ENCODE measurements at regions of chr1 and their contacts with region 1.

Region 1: GRCh38 chr1:100037927-100038659 is 68.3 kb downstream of the SLC35A3 start:
- DNase-seq: peak; percentile 90 to 95
- ATAC-seq: peak; percentile 87 to 97 (median 92)
- H3K4me3 ChIP-seq: peak overlapping the region; percentile 98
- H3K4me3 Mint-ChIP-seq: peak overlapping the region; percentile 99
- H3K27ac ChIP-seq: peak overlapping the region; percentile 99
- H3K27ac Mint-ChIP-seq: peak overlapping the region; percentile 99
- H3K4me1 ChIP-seq: peaks cover 8% of the 10 kb centered on the region
- H3K4me1 Mint-ChIP-seq: peaks cover 46 to 51% of the 10 kb centered on the region in 2 donors
- H3K27me3 ChIP-seq: no peaks in the 10 kb centered on the region
- H3K27me3 Mint-ChIP-seq: no peaks in the 10 kb centered on the region
- CTCF ChIP-seq: no peak

Region 2: DNA sequence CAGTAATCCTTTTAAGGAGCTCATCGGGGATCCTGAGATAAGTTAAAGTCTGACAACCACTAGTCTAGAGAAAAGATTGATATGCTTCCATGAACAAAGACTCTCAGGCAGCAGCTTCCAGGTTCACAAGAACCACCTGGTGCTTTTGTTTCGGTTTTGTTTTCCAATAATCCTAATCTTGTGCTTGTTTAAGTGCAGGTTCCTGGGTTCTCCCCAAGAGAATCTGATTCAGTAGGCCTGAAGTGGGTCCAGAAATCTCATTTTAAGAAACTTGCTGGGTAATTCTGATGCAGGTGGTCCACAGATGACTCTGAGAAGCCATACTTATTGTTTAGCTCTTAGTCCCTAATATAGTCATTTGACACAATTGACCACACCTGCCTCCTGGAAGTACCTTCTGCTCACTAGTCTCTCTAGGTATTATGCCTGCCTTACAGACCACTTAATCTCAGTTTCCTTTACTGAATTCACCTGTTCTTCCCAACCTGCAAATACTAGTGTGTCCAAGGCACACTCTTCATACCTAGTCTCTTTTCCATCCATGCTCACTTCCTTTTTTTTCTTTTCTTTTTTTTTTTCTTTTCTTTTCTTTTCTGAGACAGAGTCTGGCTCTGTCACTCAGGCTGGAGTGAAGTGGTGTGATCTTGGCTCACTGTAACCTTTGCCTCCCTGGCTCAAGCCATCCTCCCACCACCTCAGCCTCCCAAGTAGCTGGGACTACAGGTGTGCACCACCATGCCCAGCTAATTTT is 251.2 kb before region 1 on chr1:
- intact Hi-C with region 1: no loop called
- DNase-seq: no peak
- ATAC-seq: no peak
- H3K4me3 ChIP-seq: no peak overlapping the region
- H3K4me3 Mint-ChIP-seq: no peak overlapping the region
- H3K27ac ChIP-seq: no peak overlapping the region
- H3K27ac Mint-ChIP-seq: no peak overlapping the region
- H3K4me1 ChIP-seq: peaks cover 5% of the 10 kb centered on the region
- H3K4me1 Mint-ChIP-seq: peaks cover 4 to 6% of the 10 kb centered on the region in 2 donors
- H3K27me3 ChIP-seq: no peaks in the 10 kb centered on the region
- H3K27me3 Mint-ChIP-seq: peaks cover 16 to 38% of the 10 kb centered on the region in 2 donors
- CTCF ChIP-seq: no peak

Region 3: DNA sequence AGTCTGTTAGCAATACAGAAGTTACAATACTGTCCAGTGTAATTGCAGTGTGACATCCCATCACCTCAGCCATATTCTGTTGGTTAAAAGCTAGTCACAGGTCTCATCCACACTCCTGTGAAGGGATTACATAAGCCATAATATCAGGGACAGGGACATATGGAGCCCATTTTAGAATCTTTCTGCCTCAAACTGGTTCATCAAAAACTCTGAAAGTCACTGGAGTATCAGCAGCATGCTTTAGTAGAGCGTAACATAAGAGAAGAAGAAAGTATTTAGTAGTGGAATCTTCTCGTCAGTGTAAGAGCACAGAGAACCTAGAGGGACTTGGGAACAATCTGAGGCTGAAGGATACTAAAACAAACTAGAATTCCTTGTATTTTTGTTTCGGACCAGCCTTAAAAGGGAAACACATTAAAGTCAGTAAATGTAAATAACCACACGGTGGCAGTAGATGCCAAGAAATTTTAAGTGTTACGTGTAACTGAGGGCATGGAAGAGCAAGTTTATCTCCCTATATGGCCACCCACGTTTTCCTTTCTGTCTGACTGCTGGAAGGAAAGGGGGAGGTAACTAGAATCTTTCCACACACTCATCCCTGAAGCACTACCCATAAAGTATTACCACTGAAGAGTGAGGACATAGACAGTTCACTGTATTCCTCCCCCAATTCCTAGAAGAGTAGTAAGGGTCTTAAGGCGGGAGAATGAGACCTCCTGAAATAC is 229.5 kb before region 1 on chr1:
- intact Hi-C with region 1: loop called (anchors 1 kb)
- DNase-seq: peak in 1 of 2 donors; percentile 82
- ATAC-seq: peak; percentile 78 to 90 (median 88)
- H3K4me3 ChIP-seq: no peak overlapping the region
- H3K4me3 Mint-ChIP-seq: no peak overlapping the region
- H3K27ac ChIP-seq: no peak overlapping the region
- H3K27ac Mint-ChIP-seq: no peak overlapping the region
- H3K4me1 ChIP-seq: no peaks in the 10 kb centered on the region
- H3K4me1 Mint-ChIP-seq: no peaks in the 10 kb centered on the region
- H3K27me3 ChIP-seq: no peaks in the 10 kb centered on the region
- H3K27me3 Mint-ChIP-seq: peaks cover 7 to 8% of the 10 kb centered on the region in 2 donors
- CTCF ChIP-seq: peak; percentile 84

Region 4: DNA sequence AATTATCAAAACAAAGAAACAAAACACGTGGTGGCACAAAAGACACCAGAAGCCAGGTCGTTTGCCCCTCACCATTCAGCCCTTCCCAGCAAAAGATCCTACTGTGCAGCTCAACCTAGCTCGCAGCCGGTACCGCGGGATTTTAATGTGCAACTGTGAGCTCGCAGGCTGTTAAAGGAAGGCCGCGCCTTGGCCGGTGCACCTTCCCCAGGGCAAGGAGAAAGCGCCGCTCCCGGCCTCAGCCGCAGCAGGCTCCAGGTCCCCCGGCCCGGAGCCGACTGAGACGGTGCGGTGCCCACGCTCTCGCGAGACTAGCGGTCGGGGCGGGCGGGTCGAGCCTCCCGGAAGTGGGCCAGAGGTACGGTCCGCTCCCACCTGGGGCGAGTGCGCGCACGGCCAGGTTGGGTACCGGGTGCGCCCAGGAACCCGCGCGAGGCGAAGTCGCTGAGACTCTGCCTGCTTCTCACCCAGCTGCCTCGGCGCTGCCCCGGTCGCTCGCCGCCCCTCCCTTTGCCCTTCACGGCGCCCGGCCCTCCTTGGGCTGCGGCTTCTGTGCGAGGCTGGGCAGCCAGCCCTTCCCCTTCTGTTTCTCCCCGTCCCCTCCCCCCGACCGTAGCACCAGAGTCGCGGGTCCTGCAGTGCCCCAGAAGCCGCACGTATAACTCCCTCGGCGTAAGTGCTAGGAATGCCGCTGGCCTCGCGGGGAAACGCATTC is 188.2 kb before region 1 on chr1 and contains the start of gene AGL:
- intact Hi-C with region 1: loop called (anchors 2 kb)
- DNase-seq: peak; percentile 83 to 92
- ATAC-seq: peak; percentile 94 to 96 (median 95)
- H3K4me3 ChIP-seq: peak within 1 kb of the TSS; percentile 59
- H3K4me3 Mint-ChIP-seq: peak within 1 kb of the TSS; percentile 97
- H3K27ac ChIP-seq: peak within 1 kb of the TSS; percentile 63
- H3K27ac Mint-ChIP-seq: peak within 1 kb of the TSS; percentile 86 to 91
- H3K4me1 ChIP-seq: peaks cover 11% of the 10 kb centered on the region
- H3K4me1 Mint-ChIP-seq: peaks cover 27 to 28% of the 10 kb centered on the region in 2 donors
- H3K27me3 ChIP-seq: no peaks in the 10 kb centered on the region
- H3K27me3 Mint-ChIP-seq: peaks cover 2 to 6% of the 10 kb centered on the region in 2 donors
- CTCF ChIP-seq: no peak
- total RNA-seq, gene AGL: 13.5 to 19.4 (median 15.3) TPM

Region 5: DNA sequence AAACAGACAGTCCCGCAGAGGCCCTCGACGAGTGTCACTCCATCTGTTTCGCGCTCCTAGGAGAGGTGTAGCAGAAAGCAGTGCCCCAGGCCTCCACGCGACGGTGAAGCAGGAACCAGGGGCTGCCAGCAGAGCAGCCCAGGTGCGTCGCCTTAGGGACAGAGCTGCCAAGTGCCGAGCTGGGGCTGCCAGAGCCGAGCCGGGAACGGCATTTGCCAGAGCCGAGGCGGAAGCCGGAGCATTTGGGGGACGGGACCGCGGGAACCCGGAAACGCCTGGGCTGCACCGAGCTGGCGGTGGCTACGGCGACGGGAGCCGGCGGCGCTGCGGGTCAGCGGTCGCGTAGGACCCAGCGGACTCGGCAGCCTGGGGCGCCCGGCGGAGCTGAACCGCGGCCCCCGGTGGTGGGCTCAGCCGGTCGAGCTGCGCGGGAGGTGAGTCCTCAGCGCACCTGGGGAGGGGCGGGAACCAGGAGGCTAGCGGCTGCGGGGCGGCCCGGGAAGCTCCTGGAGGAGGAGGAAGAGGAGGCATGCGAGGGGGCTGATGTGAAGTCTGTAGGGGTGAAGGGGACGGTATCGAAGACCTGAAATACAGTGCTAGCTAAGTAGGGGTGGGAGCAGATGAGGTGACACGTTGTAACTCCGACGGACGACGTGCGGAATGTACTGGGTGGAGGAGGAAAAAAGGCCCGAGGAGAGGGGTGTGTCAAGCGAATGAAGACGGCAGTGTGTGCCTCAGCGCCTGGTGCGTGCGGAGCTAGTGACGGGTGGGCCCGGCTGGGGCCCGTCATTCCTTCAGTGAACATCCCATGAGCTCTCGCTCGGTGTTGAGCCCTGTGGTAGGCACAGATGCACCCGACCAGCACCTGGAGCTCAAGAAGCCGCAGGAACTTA is 68.1 kb before region 1 on chr1 and contains the start of gene SLC35A3:
- intact Hi-C with region 1: loop called (anchors 2 kb)
- DNase-seq: peak; percentile 75 to 87
- ATAC-seq: peak; percentile 83 to 91 (median 87)
- H3K4me3 ChIP-seq: peak within 1 kb of the TSS; percentile 94
- H3K4me3 Mint-ChIP-seq: peak within 1 kb of the TSS; percentile 97
- H3K27ac ChIP-seq: peak within 1 kb of the TSS; percentile 83
- H3K27ac Mint-ChIP-seq: peak within 1 kb of the TSS; percentile 93 to 98
- H3K4me1 ChIP-seq: peaks cover 10% of the 10 kb centered on the region
- H3K4me1 Mint-ChIP-seq: peaks cover 27 to 31% of the 10 kb centered on the region in 2 donors
- H3K27me3 ChIP-seq: no peaks in the 10 kb centered on the region
- H3K27me3 Mint-ChIP-seq: no peaks in the 10 kb centered on the region
- CTCF ChIP-seq: no peak
- total RNA-seq, gene SLC35A3: 40.2 to 49.8 (median 43.1) TPM

Region 6: GRCh38 chr1:100249537-100250257 is 211.6 kb after region 1 on chr1 and contains the start of gene DBT:
- intact Hi-C with region 1: loop called (anchors 5 kb)
- DNase-seq: peak; percentile 80 to 95
- ATAC-seq: peak; percentile 99 to 100 (median 100)
- H3K4me3 ChIP-seq: peak within 1 kb of the TSS; percentile 84
- H3K4me3 Mint-ChIP-seq: no peak within 1 kb of the TSS
- H3K27ac ChIP-seq: peak within 1 kb of the TSS; percentile 74
- H3K27ac Mint-ChIP-seq: no peak within 1 kb of the TSS
- H3K4me1 ChIP-seq: peaks cover 7% of the 10 kb centered on the region
- H3K4me1 Mint-ChIP-seq: peaks cover 0 to 10% of the 10 kb centered on the region in 2 donors
- H3K27me3 ChIP-seq: no peaks in the 10 kb centered on the region
- H3K27me3 Mint-ChIP-seq: peaks cover 3 to 10% of the 10 kb centered on the region in 2 donors
- CTCF ChIP-seq: no peak
- total RNA-seq, gene DBT: 9.9 to 11.5 (median 10.2) TPM

Region 7: DNA sequence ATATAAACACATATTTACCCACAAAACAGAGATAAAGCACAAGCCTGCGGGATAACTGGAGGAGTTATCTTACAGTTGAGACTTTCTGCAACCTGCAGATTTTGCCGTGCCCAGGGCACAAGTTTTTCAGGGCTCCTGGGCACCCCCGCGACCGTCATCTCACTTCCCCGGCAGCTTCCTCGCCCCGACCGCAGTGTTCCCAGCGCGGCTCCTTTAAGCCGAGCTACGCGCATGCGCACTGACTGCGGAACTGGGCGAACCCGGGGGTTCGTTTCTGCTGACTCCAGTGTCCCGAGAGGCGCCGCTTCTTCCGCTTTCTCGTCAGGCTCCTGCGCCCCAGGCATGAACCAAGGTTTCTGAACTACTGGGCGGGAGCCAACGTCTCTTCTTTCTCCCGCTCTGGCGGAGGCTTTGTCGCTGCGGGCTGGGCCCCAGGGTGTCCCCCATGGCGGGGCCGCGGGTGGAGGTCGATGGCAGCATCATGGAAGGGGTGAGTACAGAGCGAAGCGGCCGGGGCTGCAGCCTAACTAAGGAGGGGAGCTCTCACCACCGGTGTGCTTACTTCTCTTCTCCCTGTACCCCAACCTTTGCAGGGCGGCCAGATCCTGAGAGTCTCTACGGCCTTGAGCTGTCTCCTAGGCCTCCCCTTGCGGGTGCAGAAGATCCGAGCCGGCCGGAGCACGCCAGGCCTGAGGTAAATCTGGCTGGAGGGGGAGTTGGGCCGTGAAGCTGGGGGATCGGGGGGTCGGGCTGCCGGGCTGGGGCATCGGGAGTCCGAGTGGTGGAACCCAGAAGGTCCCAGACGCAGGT is 228.0 kb after region 1 on chr1 and contains the start of gene RTCA:
- intact Hi-C with region 1: loop called (anchors 5 kb)
- DNase-seq: peak; percentile 93 to 99
- ATAC-seq: peak; percentile 93 to 98 (median 94)
- H3K4me3 ChIP-seq: peak within 1 kb of the TSS; percentile 86
- H3K4me3 Mint-ChIP-seq: peak within 1 kb of the TSS; percentile 100
- H3K27ac ChIP-seq: peak within 1 kb of the TSS; percentile 77
- H3K27ac Mint-ChIP-seq: peak within 1 kb of the TSS; percentile 97 to 99
- H3K4me1 ChIP-seq: peaks cover 32% of the 10 kb centered on the region
- H3K4me1 Mint-ChIP-seq: peaks cover 46 to 47% of the 10 kb centered on the region in 2 donors
- H3K27me3 ChIP-seq: no peaks in the 10 kb centered on the region
- H3K27me3 Mint-ChIP-seq: no peaks in the 10 kb centered on the region
- CTCF ChIP-seq: no peak
- total RNA-seq, gene RTCA: 49.3 to 60.8 (median 52.3) TPM

Region 8: GRCh38 chr1:100414693-100415497 is 376.8 kb after region 1 on chr1:
- intact Hi-C with region 1: no loop called
- DNase-seq: peak in 1 of 2 donors; percentile 63
- ATAC-seq: peak; percentile 81 to 89 (median 88)
- H3K4me3 ChIP-seq: no peak overlapping the region
- H3K4me3 Mint-ChIP-seq: peak overlapping the region; percentile 22
- H3K27ac ChIP-seq: peak overlapping the region; percentile 59
- H3K27ac Mint-ChIP-seq: peak overlapping the region; percentile 89 to 92
- H3K4me1 ChIP-seq: peaks cover 9% of the 10 kb centered on the region
- H3K4me1 Mint-ChIP-seq: peaks cover 51 to 55% of the 10 kb centered on the region in 2 donors
- H3K27me3 ChIP-seq: no peaks in the 10 kb centered on the region
- H3K27me3 Mint-ChIP-seq: no peaks in the 10 kb centered on the region
- CTCF ChIP-seq: no peak

Region 9: GRCh38 chr1:100584761-100585745 is 547.0 kb after region 1 on chr1:
- intact Hi-C with region 1: no loop called
- DNase-seq: no peak
- ATAC-seq: no peak
- H3K4me3 ChIP-seq: no peak overlapping the region
- H3K4me3 Mint-ChIP-seq: no peak overlapping the region
- H3K27ac ChIP-seq: no peak overlapping the region
- H3K27ac Mint-ChIP-seq: no peak overlapping the region
- H3K4me1 ChIP-seq: peaks cover 5% of the 10 kb centered on the region
- H3K4me1 Mint-ChIP-seq: peaks cover 11% of the 10 kb centered on the region in 2 donors
- H3K27me3 ChIP-seq: no peaks in the 10 kb centered on the region
- H3K27me3 Mint-ChIP-seq: peaks cover 15 to 21% of the 10 kb centered on the region in 2 donors
- CTCF ChIP-seq: no peak

Region 10: DNA sequence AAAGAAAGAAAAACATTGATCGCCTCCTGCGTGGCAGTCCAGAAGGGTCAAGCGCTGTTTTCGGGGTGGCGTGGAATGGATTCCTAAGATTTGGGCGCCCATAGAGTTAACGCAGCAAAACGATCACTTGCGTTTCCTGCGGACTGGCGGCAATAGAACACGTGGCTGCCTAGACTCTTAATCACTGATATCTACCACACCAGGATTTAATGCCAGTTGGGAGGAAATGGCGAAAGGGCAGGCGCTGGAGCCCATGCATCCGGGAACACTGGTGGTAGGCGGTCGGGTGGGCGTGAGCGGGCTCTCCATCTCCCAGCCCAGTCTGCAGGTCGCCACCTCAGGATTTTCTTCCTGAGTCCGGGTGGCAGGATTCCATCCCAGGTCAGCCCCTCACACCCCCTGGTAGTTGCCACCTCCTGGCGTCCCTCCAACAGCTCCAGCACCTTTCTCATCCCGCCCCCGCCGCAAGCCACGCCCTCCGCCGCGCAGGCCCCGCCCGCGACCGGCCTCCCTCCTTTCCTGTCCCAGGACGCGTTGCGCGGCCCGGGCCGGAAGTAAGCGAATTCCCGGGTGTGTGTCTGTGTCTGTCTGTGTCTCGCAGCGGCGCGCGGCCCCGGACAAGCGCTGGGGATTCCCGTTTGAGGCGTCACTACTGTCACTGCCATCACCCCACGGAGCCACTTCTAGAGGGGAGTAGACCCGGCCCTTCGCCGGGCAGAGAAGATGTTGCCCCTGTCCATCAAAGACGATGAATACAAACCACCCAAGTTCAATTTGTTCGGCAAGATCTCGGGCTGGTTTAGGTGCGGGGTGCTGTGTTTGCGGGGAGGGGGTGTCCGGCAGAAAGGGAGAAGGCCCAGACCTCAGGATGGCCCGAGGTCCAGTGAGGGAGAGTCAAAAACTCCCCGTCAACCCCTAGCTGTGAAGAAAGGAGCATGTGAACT is 857.7 kb after region 1 on chr1 and contains the start of gene SLC30A7:
- intact Hi-C with region 1: loop called (anchors 10 kb)
- DNase-seq: peak; percentile 95 to 97
- ATAC-seq: peak; percentile 81 to 94 (median 86)
- H3K4me3 ChIP-seq: peak within 1 kb of the TSS; percentile 97
- H3K4me3 Mint-ChIP-seq: peak within 1 kb of the TSS; percentile 99
- H3K27ac ChIP-seq: peak within 1 kb of the TSS; percentile 99
- H3K27ac Mint-ChIP-seq: peak within 1 kb of the TSS; percentile 100
- H3K4me1 ChIP-seq: peaks cover 8% of the 10 kb centered on the region
- H3K4me1 Mint-ChIP-seq: peaks cover 40 to 46% of the 10 kb centered on the region in 2 donors
- H3K27me3 ChIP-seq: no peaks in the 10 kb centered on the region
- H3K27me3 Mint-ChIP-seq: no peaks in the 10 kb centered on the region
- CTCF ChIP-seq: no peak
- total RNA-seq, gene SLC30A7: 27.7 to 38.8 (median 36.2) TPM

Measured in natural killer cell (primary cell).